HepG2 (cell line): ENCODE measurements at regions of chr21 and their contacts with region 1.

Region 1: DNA sequence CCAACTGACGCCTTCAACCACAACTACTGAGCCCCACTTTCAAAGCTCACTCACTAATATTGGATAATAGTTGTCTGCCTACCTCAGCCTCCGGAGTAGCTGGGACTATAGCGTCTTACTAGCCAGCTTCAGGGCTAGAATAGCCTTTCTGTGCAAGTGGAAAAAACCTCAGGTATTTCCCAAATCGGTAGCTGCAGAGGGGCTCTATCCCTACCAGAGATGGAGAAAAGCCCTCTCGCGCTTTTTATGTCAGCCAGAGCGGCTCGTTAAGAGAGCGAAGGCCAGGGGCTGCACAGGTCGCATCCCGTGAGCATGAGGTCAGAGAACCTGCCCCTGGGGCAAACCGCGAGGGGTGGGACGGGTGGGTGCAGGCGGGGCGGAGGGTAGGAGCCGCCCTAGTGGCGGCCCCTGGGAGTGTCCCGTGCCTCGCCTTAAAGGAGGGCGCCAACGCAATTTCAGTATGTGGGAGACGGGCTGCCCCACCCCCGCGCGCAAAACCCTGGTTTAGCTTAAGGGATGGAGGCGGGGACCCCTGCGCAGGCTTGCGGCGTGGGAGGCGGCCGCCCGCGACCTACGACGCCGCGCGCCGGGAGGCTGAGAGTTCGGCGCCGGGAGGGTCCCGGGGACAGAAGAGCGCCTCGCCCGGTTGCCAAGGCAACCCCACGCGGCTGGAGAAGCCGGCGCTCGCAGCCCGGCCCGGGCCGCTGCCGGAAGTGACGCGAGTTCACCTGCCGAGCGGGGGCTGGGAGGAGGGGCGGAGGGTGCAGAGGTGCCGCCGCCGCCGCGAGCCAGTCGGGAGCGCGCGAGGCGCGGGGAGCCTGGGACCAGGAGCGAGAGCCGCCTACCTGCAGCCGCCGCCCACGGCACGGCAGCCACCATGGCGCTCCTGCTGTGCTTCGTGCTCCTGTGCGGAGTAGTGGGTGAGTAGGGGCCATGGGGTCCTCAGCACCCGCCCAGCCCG is at the start of gene CXADR:
- DNase-seq: peak; percentile 89
- ATAC-seq: peak; percentile 88
- H3K4me3 ChIP-seq: peak within 1 kb of the TSS; percentile 85 to 96 (median 92)
- H3K27ac ChIP-seq: peak within 1 kb of the TSS; percentile 90
- H3K4me1 ChIP-seq: peaks cover 52% of the 10 kb centered on the region
- H3K27me3 ChIP-seq: no peaks in the 10 kb centered on the region; a peak in 1 of 5 replicates
- CTCF ChIP-seq: peak; percentile 81
- EP300 ChIP-seq: peak in 1 of 2 experiments; percentile 29; a peak in 1 of 4 replicates
- POLR2A ChIP-seq: peak; percentile 91 to 96
- RAD21 ChIP-seq: peak; percentile 78
- total RNA-seq, gene CXADR: 57.0 and 86.8 TPM in 2 replicates

Region 2: GRCh38 chr21:17454315-17455027 is 58.1 kb before region 1 on chr21:
- CTCF ChIA-PET with region 1: no interaction called
- POLR2A ChIA-PET with region 1: interaction called, 8 read pairs
- in situ Hi-C with region 1: no loop called
- intact Hi-C with region 1: loop called (anchors 1 kb)
- DNase-seq: peak; percentile 91
- ATAC-seq: peak; percentile 96
- H3K4me3 ChIP-seq: peak overlapping the region; percentile 54 to 78 (median 73)
- H3K27ac ChIP-seq: peak overlapping the region; percentile 83
- H3K4me1 ChIP-seq: peaks cover 42% of the 10 kb centered on the region
- H3K27me3 ChIP-seq: no peaks in the 10 kb centered on the region
- CTCF ChIP-seq: 0 out of 2 replicates have a peak, but pooled peaks have one; percentile 3
- EP300 ChIP-seq: peak in 1 of 2 experiments; percentile 25; a peak in 1 of 4 replicates
- POLR2A ChIP-seq: no peak
- RAD21 ChIP-seq: peak; percentile 35; the same call in 1 of the 2 replicates

Region 3: DNA sequence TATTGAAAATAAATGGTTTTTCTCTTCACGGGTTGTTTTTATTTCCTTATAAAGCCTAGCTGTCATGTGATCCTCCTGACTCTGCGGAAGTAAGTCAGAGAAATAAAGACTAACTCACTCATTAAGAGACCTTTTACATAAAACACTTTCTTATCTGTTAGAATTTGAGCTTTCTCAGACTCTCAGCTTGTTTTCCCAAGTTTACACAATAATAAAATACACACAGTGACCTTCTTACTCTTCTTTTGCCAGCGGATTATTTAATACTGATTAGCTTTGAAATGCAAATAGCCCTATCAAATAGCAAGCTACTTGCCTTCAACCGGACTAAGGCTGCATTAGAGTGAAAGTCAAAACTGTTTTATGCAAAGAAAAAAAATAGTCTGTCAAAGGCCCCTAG is 45.1 kb before region 1 on chr21:
- CTCF ChIA-PET with region 1: no interaction called
- POLR2A ChIA-PET with region 1: interaction called, 20 read pairs
- in situ Hi-C with region 1: no loop called
- intact Hi-C with region 1: loop called (anchors 1 kb)
- DNase-seq: peak; percentile 27
- ATAC-seq: no peak; the same call in 2 of the 3 replicates
- H3K4me3 ChIP-seq: peak overlapping the region; percentile 33 to 67 (median 58); a peak in 4 of 6 replicates
- H3K27ac ChIP-seq: peak overlapping the region; percentile 87
- H3K4me1 ChIP-seq: peaks cover 78% of the 10 kb centered on the region
- H3K27me3 ChIP-seq: no peaks in the 10 kb centered on the region
- CTCF ChIP-seq: no peak
- EP300 ChIP-seq: no peak
- POLR2A ChIP-seq: no peak
- RAD21 ChIP-seq: no peak

Region 4: DNA sequence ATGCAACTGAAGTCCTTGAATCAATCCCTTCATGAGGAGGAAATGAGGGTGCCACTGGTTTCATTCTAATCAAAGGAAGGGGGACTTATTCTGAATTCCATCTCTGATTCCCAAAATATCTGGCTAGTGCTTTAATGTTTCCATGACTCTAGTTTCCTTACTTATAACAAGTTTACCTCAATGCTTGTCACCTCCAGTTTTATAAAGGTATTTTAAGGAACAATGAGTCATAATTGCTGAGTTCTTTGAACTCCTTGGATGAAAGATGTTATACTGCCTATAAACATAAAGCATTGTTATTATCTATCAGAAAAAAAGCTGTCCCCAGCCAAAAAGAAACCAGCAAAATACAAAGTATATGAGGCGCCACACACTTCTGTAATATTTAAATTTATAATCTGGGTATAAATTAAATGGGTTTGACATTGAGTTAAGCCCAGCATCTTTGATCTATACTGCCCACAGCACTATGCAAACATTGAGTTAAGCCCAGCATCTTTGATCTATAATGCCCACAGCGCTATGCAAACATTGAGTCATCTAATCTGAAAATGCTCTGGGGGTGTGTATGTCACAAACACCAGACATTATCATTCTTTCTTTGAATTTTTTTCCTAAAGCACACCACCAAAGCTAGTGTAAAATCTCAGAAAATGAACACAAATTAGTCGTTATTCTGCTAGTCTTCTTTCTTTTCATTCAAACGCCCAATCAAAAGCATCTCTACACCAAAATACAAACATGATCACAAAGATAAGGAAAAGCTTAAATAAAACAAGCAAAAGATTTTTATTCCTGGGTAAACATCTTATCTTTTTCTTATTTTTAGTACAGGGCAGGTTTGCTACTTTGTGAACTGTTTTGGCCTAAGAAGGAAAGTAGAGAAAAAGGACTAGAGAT is 11.2 kb before region 1 on chr21:
- CTCF ChIA-PET with region 1: no interaction called
- POLR2A ChIA-PET with region 1: interaction called, 22 read pairs
- in situ Hi-C with region 1: no loop called
- intact Hi-C with region 1: no loop called
- DNase-seq: peak; percentile 98
- ATAC-seq: peak; percentile 99
- H3K4me3 ChIP-seq: peak overlapping the region in 2 of 3 experiments; percentile 9 to 18; a peak in 2 of 6 replicates
- H3K27ac ChIP-seq: peak overlapping the region; percentile 78
- H3K4me1 ChIP-seq: peaks cover 70% of the 10 kb centered on the region
- H3K27me3 ChIP-seq: no peaks in the 10 kb centered on the region
- CTCF ChIP-seq: no peak
- EP300 ChIP-seq: peak; percentile 98 to 100
- POLR2A ChIP-seq: no peak
- RAD21 ChIP-seq: no peak

Region 5: GRCh38 chr21:17537299-17537698 is 24.8 kb after region 1 on chr21:
- CTCF ChIA-PET with region 1: no interaction called
- POLR2A ChIA-PET with region 1: interaction called, 18 read pairs
- in situ Hi-C with region 1: no loop called
- intact Hi-C with region 1: no loop called
- DNase-seq: no peak
- ATAC-seq: no peak
- H3K4me3 ChIP-seq: no peak overlapping the region
- H3K27ac ChIP-seq: peak overlapping the region; percentile 13
- H3K4me1 ChIP-seq: peaks cover 98% of the 10 kb centered on the region
- H3K27me3 ChIP-seq: no peaks in the 10 kb centered on the region
- CTCF ChIP-seq: no peak
- EP300 ChIP-seq: no peak
- POLR2A ChIP-seq: no peak
- RAD21 ChIP-seq: no peak

Region 6: GRCh38 chr21:17554679-17555465 is 42.3 kb after region 1 on chr21:
- CTCF ChIA-PET with region 1: no interaction called
- POLR2A ChIA-PET with region 1: interaction called, 4 read pairs
- in situ Hi-C with region 1: no loop called
- intact Hi-C with region 1: loop called (anchors 1 kb)
- DNase-seq: peak; percentile 32
- ATAC-seq: peak; percentile 62
- H3K4me3 ChIP-seq: no peak overlapping the region
- H3K27ac ChIP-seq: no peak overlapping the region
- H3K4me1 ChIP-seq: peaks cover 20% of the 10 kb centered on the region
- H3K27me3 ChIP-seq: no peaks in the 10 kb centered on the region
- CTCF ChIP-seq: peak; percentile 64
- EP300 ChIP-seq: no peak
- POLR2A ChIP-seq: no peak
- RAD21 ChIP-seq: peak; percentile 59